Head of caudate nucleus (tissue), 42 donors: ENCODE measurements at regions of chr4 and their contacts with region 1.

Region 1: GRCh38 chr4:101259876-101260275 is 87.5 kb downstream of the PPP3CA start:
- DNase-seq: no peak

Region 2: DNA sequence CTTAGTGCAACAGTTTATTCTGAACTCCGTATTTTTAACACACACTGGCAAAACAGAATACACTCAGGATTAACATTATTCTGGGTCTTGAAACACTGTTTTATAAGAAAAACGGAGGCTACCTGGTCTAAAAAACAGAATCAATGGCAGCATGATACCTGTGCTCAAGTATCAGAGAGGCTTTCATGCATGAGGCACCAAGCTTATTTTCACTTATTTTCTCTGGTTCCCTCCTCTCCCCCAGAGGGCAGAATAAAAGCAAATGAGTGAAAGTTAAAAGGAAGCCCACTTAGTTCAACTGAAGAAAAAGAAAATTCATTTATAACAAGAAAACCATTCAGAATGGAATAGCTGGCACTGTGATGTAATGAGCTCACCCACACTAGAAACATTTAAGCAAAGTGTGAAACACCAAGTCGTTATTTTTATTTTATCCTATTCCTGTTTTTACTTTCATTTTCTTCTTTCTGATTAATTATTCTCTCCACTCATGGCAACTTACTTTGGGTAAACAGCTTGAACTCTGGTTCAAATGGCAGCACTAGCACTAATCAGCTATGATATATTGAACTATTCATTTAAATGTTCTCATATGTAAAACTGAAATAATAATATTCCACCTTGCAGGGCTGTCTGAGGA is 124.4 kb before region 1 on chr4:
- intact Hi-C with region 1: no loop called
- DNase-seq: no peak

Region 3: GRCh38 chr4:101211146-101211908 is 48.5 kb before region 1 on chr4:
- intact Hi-C with region 1: loop called (anchors 10 kb)
- DNase-seq: no peak